Ascending aorta (tissue), 2 donors: ENCODE measurements at regions of chr6 and their contacts with region 1.

Region 1: DNA sequence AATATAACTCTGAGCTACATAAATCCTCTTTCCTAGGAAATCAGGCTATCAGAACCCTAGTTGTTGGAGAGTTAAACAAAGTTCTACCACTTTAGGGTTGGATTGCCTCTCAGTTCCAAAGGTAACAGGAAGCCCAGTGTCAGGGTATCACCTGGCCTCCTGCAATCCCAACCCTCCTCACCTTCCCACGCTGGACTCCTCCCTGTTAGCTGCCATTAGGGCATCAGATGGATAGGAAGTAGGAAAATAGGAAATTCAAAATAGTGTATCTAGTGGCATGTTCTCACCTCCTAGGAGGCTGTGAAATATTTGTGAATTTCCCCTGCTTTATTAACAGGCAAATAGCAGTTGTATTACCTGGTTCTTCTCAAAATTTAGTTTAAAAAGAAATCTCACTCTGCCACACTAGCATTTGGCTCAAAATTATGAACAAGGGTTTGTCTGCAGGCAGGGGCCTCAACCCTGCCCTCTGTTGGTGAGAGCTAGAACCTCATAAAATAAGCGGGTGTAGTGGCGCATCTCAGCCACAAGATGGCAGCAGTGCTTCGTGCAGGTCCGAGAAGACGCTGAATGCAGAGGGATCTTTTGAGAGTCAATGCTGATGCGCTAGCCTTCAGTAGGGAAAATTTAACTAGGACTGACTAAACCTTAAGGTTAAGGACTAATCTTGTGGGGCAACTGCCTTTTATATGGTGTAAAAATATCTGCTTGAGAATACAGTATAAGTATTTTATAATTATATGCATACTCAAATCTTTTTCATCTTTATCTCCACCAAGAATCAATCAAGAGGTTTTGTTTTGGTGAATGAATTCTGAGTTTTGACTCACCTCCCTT is 209.8 kb upstream of the KCNQ5 start:
- DNase-seq: peak in 1 of 2 donors; percentile 85
- H3K4me3 ChIP-seq: no peak overlapping the region
- H3K27ac ChIP-seq: no peak overlapping the region
- H3K4me1 ChIP-seq: no peaks in the 10 kb centered on the region
- H3K27me3 ChIP-seq: no peaks in the 10 kb centered on the region
- CTCF ChIP-seq: peak; percentile 99 to 100 (median 100)

Region 2: DNA sequence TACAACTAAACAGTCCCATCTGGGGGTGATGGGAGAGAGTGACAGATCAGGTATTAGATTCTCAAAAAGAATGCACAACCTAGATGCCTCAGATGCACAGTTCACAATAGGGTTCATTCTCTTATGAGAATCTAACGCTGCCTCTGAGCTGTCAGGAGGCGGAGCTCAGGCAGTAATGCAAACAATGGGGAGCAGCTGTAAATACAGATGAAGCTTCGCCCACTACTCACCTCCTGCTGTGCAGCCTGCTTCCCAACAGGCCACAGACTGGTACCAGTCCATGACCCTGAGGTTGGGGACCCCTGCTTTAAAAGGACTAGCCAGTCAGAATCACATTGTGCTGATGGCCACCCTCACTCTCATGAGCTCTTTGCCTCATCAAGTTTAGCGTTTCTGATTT is 37.2 kb before region 1 on chr6:
- intact Hi-C with region 1: no loop called
- DNase-seq: no peak
- H3K4me3 ChIP-seq: no peak overlapping the region
- H3K27ac ChIP-seq: no peak overlapping the region
- H3K4me1 ChIP-seq: no peaks in the 10 kb centered on the region
- H3K27me3 ChIP-seq: no peaks in the 10 kb centered on the region
- CTCF ChIP-seq: no peak

Region 3: DNA sequence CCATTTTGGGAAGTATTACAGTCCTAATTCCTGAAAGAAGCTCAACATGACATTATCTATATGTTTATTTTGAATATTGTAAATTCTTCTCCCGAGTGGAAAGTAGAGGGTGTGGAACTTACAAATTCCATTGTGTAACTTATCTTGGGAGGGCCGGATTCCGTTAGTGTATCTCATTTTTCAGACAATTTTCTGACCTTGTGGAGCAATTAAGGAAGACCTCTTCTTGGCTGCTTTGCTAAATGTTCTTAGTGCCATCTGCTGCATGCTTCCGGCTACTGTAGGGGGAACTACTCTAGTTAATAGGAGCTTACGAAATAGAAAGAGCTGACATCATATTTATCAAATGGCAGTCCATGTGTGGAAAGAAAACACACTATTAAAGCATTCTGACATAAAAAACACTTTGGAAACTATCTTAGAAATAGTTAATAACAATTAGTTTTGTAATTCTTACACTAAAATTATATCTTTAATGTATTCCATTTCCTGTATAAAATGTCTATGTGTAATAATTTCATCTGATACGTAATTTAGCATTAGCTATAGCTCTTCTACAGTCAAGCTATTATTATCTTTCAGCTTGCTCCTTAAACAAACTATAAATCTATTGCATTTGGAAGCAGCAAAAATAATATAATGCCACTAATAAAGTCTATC is 168.3 kb after region 1 on chr6:
- intact Hi-C with region 1: loop called (anchors 10 kb)
- DNase-seq: no peak
- H3K4me3 ChIP-seq: no peak overlapping the region
- H3K27ac ChIP-seq: no peak overlapping the region
- H3K4me1 ChIP-seq: no peaks in the 10 kb centered on the region
- H3K27me3 ChIP-seq: no peaks in the 10 kb centered on the region
- CTCF ChIP-seq: peak in 1 of 3 experiments; percentile 19

Region 4: GRCh38 chr6:73129653-73130443 is 717.8 kb after region 1 on chr6:
- intact Hi-C with region 1: loop called (anchors 1 kb)
- DNase-seq: peak in 1 of 2 donors; percentile 88
- H3K4me3 ChIP-seq: peak overlapping the region in 1 of 2 donors; percentile 26
- H3K27ac ChIP-seq: no peak overlapping the region
- H3K4me1 ChIP-seq: no peaks in the 10 kb centered on the region
- H3K27me3 ChIP-seq: no peaks in the 10 kb centered on the region
- CTCF ChIP-seq: peak; percentile 87 to 99 (median 97)

Region 5: DNA sequence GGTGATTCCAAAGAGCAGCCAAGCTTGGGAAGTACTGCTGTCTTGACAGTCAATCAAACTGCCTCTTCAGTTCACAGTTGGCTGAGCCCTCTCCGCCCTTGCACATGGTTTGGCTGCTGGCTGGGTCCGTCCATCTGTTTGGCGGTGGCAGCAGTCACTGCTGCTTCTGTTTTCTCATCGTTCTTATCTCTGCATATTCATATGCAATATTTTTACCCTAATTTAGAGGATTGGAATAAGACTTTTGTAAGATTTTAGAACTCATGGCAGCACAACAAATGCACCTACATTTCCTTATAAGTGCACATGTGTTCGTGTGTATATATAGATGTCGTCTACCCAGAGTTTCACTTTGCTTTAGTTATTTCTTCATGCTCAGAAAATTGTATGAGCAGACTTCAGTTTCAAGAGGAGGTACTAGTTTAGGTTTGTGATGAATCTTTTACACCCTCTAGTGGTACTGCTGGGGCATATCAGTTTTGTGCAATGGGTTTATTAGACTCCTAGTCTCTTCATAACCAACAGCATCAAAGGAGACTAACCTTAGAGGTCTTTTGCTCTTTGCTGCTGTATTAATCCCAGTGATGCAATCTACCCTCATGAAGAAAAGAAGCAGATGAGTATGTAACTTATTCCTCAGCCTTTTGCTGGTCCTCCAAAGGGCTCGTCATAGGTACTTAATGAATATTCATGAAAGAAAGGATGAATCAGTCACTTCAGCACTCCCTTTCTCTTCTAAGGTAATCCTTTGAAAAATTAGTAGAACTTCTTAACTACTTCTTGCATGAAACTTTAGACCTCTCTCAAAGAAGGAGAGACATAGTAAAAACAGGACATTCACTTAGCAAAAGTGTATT is 768.9 kb after region 1 on chr6:
- intact Hi-C with region 1: loop called (anchors 1 kb)
- DNase-seq: no peak
- H3K4me3 ChIP-seq: peak overlapping the region; percentile 38 to 51
- H3K27ac ChIP-seq: no peak overlapping the region
- H3K4me1 ChIP-seq: no peaks in the 10 kb centered on the region
- H3K27me3 ChIP-seq: no peaks in the 10 kb centered on the region
- CTCF ChIP-seq: peak; percentile 61 to 77 (median 77)

Region 6: GRCh38 chr6:73329201-73329600 is 917.1 kb after region 1 on chr6:
- intact Hi-C with region 1: loop called (anchors 10 kb)
- DNase-seq: no peak
- H3K4me3 ChIP-seq: no peak overlapping the region
- H3K27ac ChIP-seq: no peak overlapping the region
- H3K4me1 ChIP-seq: no peaks in the 10 kb centered on the region
- H3K27me3 ChIP-seq: no peaks in the 10 kb centered on the region
- CTCF ChIP-seq: no peak